ENCODE measurements at regions of chr13 and their contacts with region 1.

Region 1: GRCh38 chr13:43180837-43181236 is 157.5 kb downstream of the DNAJC15 start:
- DNase-seq: no peak
- H3K4me3 Mint-ChIP-seq: no peak overlapping the region
- H3K27ac Mint-ChIP-seq: no peak overlapping the region
- H3K4me1 Mint-ChIP-seq: no peaks in the 10 kb centered on the region
- H3K27me3 Mint-ChIP-seq: peaks cover 16% of the 10 kb centered on the region

Region 2: GRCh38 chr13:42926555-42926954 is 254.3 kb before region 1 on chr13:
- intact Hi-C with region 1: no loop called
- DNase-seq: no peak
- H3K4me3 Mint-ChIP-seq: no peak overlapping the region
- H3K27ac Mint-ChIP-seq: peak overlapping the region; percentile 54
- H3K4me1 Mint-ChIP-seq: peaks cover 18% of the 10 kb centered on the region
- H3K27me3 Mint-ChIP-seq: no peaks in the 10 kb centered on the region

Region 3: DNA sequence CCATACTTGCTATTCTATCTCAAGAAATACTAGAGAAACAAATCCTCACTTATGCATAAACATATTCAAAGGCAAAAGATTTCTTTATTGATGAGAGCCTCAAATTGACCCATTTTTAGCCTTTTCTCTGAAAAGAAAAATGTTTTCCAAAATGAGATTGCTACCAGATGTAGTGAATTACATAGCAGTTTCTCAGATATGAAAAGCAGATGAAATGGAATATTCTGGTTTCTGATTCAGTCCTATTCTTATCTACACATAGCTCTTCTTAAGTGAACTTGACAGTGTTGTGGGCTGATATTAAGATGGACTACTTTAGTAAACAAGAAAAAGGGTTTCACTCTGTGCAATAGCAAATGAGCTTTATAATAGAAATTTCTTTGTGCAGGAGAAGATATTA is 26.0 kb after region 1 on chr13:
- intact Hi-C with region 1: loop called (anchors 1 kb)
- DNase-seq: no peak
- H3K4me3 Mint-ChIP-seq: no peak overlapping the region
- H3K27ac Mint-ChIP-seq: no peak overlapping the region
- H3K4me1 Mint-ChIP-seq: no peaks in the 10 kb centered on the region
- H3K27me3 Mint-ChIP-seq: peaks cover 14% of the 10 kb centered on the region